Activated CD8-positive, alpha-beta memory T cell treated with anti-CD3 and anti-CD28 coated beads, Interleukin-2, amount 10 ng/mL, durations not matched to agents 7 days and 5 days (primary cell): ENCODE measurements at regions of chr16 and their contacts with region 1.

Region 1: GRCh38 chr16:30407102-30407803 is at the start of gene ZNF771:
- DNase-seq: peak; percentile 94
- ATAC-seq: peak; percentile 92
- H3K4me3 Mint-ChIP-seq: peak within 1 kb of the TSS; percentile 79
- H3K27ac Mint-ChIP-seq: peak within 1 kb of the TSS; percentile 82
- H3K4me1 Mint-ChIP-seq: peaks cover 31% of the 10 kb centered on the region
- H3K27me3 Mint-ChIP-seq: peaks cover 10% of the 10 kb centered on the region
- total RNA-seq, gene ZNF771: 4.9 to 5.4 TPM

Region 2: DNA sequence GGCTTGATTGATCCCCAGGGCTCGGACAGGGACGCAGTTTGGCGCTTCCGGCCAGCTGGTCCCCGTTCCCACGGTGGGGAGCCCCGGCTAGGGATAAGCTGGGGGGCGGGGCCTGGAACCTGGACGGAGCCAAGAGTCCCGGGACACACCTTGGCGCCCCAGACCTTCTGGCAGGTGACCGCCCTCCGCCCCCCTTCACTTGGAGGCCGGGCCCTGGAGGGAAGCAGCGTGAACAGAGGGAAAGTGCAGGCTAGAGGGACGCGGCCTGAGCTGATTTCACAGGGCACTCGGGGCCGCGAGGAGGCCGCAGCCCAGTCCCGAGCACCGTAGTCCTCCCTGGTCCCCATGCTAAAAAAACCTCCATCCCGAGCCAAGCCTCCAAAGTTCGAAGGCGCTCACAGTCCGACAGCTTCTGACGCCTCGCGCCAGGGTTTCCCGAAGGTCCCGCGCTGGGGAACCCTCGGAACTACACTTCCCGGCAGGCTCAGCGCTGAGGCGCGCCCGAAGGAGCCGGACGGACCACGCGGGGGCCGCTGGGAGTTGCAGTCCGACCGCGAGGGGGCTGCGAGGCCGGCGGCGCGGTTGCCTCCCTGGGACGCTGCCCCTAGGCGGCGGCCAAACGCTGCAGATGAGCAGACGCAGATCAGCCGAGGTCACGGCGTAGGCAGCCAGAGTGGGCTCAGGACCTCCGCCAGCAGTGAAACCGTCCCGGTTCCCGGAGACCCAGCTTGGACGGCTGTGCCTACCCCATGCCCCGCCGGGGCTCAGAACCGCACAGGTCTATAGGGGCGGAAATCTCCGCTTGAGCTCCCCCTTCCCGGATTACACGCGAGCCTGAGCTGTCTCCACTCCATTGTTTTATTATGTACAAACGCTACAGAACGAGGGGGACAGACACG is 315.5 kb before region 1 on chr16 and contains the start of gene TBX6:
- CTCF ChIA-PET with region 1: interaction called, 12 read pairs
- DNase-seq: peak; percentile 97
- ATAC-seq: peak; percentile 86
- H3K4me3 Mint-ChIP-seq: peak within 1 kb of the TSS; percentile 84
- H3K27ac Mint-ChIP-seq: peak within 1 kb of the TSS; percentile 96
- H3K4me1 Mint-ChIP-seq: peaks cover 53% of the 10 kb centered on the region
- H3K27me3 Mint-ChIP-seq: no peaks in the 10 kb centered on the region
- total RNA-seq, gene TBX6: 2.0 to 2.9 TPM

Region 3: DNA sequence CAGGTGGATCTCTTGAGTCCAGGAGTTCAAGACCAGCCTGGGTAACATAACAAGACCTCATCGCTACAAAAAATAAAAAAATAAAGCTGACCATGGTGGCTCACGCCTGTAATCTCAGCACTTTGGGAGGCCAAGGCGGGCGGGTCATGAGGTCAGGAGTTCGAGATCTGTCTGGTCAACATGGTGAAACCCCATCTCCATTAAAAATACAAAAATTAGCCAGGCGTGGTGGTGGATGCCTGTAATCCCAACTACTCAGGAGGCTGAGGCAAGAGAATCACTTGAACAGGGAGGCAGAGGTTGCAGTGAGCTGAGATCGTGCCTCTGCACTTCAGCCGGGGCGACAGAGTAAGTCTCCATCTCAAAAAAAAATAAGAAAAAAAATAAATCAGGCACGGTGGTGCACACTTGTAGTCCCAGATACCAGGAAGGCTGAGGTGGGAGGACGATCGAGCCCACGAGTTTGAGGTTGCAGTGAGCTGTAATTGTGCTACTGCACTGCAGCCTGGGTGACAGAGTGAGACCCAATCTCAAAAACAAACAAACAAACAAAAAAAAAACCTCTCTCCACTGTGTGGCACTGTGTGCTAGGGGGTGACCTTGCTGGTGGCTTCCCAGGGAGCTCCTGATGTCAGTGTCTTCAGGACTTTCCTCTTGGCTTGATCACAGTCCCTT is 264.4 kb before region 1 on chr16:
- CTCF ChIA-PET with region 1: interaction called, 25 read pairs
- DNase-seq: peak; percentile 58
- ATAC-seq: peak; percentile 96
- H3K4me3 Mint-ChIP-seq: no peak overlapping the region
- H3K27ac Mint-ChIP-seq: peak overlapping the region; percentile 47
- H3K4me1 Mint-ChIP-seq: peaks cover 31% of the 10 kb centered on the region
- H3K27me3 Mint-ChIP-seq: no peaks in the 10 kb centered on the region

Region 4: GRCh38 chr16:30365200-30365720 is 42.0 kb before region 1 on chr16:
- CTCF ChIA-PET with region 1: interaction called, 61 read pairs
- DNase-seq: no peak
- ATAC-seq: no peak
- H3K4me3 Mint-ChIP-seq: no peak overlapping the region
- H3K27ac Mint-ChIP-seq: no peak overlapping the region
- H3K4me1 Mint-ChIP-seq: peaks cover 30% of the 10 kb centered on the region
- H3K27me3 Mint-ChIP-seq: no peaks in the 10 kb centered on the region

Region 5: GRCh38 chr16:30382111-30382881 is 25.0 kb before region 1 on chr16 and contains the start of gene SEPTIN1:
- CTCF ChIA-PET with region 1: interaction called, 56 read pairs
- DNase-seq: peak; percentile 94
- ATAC-seq: peak; percentile 46
- H3K4me3 Mint-ChIP-seq: peak within 1 kb of the TSS; percentile 91
- H3K27ac Mint-ChIP-seq: peak within 1 kb of the TSS; percentile 98
- H3K4me1 Mint-ChIP-seq: peaks cover 47% of the 10 kb centered on the region
- H3K27me3 Mint-ChIP-seq: no peaks in the 10 kb centered on the region
- total RNA-seq, gene SEPTIN1: 259 to 278 TPM

Region 6: DNA sequence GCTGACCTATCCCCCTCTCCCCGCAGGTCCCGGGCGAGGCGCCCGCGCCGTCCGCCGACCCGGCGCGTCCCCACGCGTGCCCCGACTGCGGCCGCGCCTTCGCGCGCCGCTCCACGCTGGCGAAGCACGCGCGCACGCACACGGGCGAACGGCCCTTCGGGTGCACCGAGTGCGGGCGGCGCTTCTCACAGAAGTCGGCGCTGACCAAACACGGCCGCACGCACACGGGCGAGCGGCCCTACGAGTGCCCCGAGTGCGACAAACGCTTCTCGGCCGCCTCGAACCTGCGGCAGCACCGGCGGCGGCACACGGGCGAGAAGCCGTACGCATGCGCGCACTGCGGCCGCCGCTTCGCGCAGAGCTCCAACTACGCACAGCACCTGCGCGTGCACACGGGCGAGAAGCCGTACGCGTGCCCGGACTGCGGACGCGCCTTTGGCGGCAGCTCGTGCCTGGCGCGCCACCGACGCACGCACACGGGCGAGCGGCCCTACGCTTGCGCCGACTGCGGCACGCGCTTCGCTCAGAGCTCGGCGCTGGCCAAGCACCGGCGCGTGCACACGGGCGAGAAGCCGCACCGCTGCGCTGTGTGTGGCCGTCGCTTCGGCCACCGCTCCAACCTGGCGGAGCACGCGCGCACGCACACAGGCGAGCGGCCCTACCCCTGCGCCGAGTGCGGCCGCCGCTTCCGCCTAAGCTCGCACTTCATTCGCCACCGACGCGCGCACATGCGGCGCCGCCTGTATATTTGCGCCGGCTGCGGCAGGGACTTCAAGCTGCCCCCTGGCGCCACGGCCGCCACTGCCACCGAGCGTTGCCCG is 10.5 kb after region 1 on chr16:
- CTCF ChIA-PET with region 1: interaction called, 32 read pairs
- DNase-seq: peak; percentile 93
- ATAC-seq: peak; percentile 91
- H3K4me3 Mint-ChIP-seq: peak overlapping the region; percentile 64
- H3K27ac Mint-ChIP-seq: peak overlapping the region; percentile 48
- H3K4me1 Mint-ChIP-seq: peaks cover 31% of the 10 kb centered on the region
- H3K27me3 Mint-ChIP-seq: no peaks in the 10 kb centered on the region

Region 7: GRCh38 chr16:30521873-30522641 is 114.8 kb after region 1 on chr16:
- CTCF ChIA-PET with region 1: no interaction called
- DNase-seq: no peak
- ATAC-seq: no peak
- H3K4me3 Mint-ChIP-seq: no peak overlapping the region
- H3K27ac Mint-ChIP-seq: peak overlapping the region; percentile 25
- H3K4me1 Mint-ChIP-seq: peaks cover 26% of the 10 kb centered on the region
- H3K27me3 Mint-ChIP-seq: no peaks in the 10 kb centered on the region

Region 8: GRCh38 chr16:30571695-30572600 is 164.7 kb after region 1 on chr16 and contains the start of gene ZNF688:
- CTCF ChIA-PET with region 1: no interaction called
- DNase-seq: peak; percentile 98
- ATAC-seq: peak; percentile 86
- H3K4me3 Mint-ChIP-seq: peak within 1 kb of the TSS; percentile 99
- H3K27ac Mint-ChIP-seq: peak within 1 kb of the TSS; percentile 94
- H3K4me1 Mint-ChIP-seq: peaks cover 52% of the 10 kb centered on the region
- H3K27me3 Mint-ChIP-seq: no peaks in the 10 kb centered on the region
- total RNA-seq, gene ZNF688: 14.5 to 14.7 TPM